Colonic mucosa (tissue), 4 donors: ENCODE measurements at regions of chr2 and their contacts with region 1.

Region 1: GRCh38 chr2:172588931-172589330 is 33.0 kb downstream of the PDK1 start:
- DNase-seq: no peak
- H3K4me3 ChIP-seq: no peak overlapping the region
- H3K27ac ChIP-seq: no peak overlapping the region
- H3K4me1 ChIP-seq: no peaks in the 10 kb centered on the region
- H3K27me3 ChIP-seq: no peaks in the 10 kb centered on the region
- CTCF ChIP-seq: no peak

Region 2: DNA sequence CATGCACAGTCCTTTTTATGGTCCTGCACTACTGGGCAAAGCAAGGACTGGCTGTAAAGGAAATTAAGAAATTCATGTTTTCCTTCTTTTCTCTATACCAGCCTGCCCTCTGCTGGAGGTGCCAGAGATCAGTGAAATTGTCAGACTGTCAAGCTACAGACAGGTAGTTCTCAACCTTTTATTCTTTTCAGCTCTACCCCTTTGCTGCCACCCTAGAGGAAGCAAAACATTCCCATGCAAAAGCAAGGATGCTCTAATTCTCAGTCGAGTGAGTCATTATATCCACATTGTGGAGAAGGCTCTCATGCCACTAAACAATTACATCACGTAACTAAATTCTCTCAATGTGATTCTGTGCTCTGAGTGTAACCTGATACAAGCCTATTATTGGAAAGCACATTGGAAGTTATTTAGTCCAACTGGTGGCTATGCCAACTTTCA is 121.7 kb after region 1 on chr2:
- intact Hi-C with region 1: loop called (anchors 2 kb)
- DNase-seq: peak; percentile 54
- H3K4me3 ChIP-seq: no peak overlapping the region
- H3K27ac ChIP-seq: no peak overlapping the region
- H3K4me1 ChIP-seq: no peaks in the 10 kb centered on the region
- H3K27me3 ChIP-seq: no peaks in the 10 kb centered on the region
- CTCF ChIP-seq: peak; percentile 59